ENCODE measurements at regions of chr5 and their contacts with region 1.

Region 1: GRCh38 chr5:133944263-133945185 is 23.9 kb downstream of the C5orf15 start:
- DNase-seq: no peak
- ATAC-seq: peak; percentile 87
- H3K4me3 Mint-ChIP-seq: no peak overlapping the region
- H3K27ac Mint-ChIP-seq: no peak overlapping the region
- H3K4me1 Mint-ChIP-seq: peaks cover 44% of the 10 kb centered on the region
- H3K27me3 Mint-ChIP-seq: no peaks in the 10 kb centered on the region
- CTCF ChIP-seq: no peak

Region 2: GRCh38 chr5:133364936-133365707 is 579.4 kb before region 1 on chr5:
- CTCF ChIA-PET with region 1: interaction called, 7 read pairs
- POLR2A ChIA-PET with region 1: no interaction called
- intact Hi-C with region 1: loop called (anchors 1 kb)
- DNase-seq: no peak
- ATAC-seq: peak; percentile 50
- H3K4me3 Mint-ChIP-seq: no peak overlapping the region
- H3K27ac Mint-ChIP-seq: no peak overlapping the region
- H3K4me1 Mint-ChIP-seq: no peaks in the 10 kb centered on the region
- H3K27me3 Mint-ChIP-seq: peaks cover 7% of the 10 kb centered on the region
- CTCF ChIP-seq: no peak

Region 3: DNA sequence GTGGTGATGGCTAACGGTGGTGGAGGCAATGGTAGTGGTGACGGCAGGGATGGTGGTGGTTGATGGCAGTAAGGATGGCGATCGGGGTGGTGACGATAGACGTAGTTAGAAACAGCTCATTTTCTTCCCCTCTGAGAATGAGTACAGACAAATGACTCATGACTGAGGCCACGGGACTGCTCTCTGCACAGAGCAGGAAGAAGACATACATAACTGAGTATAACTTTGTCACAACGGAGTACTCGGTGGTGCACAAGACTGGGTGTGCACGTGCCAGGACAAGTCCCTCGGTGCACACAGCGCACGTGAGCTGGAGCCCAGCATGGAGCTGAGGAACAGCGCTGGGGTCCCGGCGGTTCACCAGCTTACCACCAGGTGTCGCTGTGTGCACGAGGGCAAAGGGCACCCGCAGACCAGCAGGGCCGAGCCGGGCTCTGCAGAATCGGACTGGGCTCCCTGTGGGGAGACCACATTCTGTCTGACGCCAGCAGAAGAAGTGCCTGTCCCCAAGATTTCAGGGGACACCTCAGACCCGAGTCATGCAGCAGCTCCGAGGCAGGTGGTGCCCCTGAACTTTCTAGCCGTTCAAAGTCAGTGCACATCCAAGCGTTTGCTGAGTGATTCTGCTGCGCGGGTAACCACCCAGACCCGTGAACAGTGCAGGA is 520.8 kb before region 1 on chr5:
- CTCF ChIA-PET with region 1: interaction called, 15 read pairs
- POLR2A ChIA-PET with region 1: no interaction called
- intact Hi-C with region 1: loop called (anchors 1 kb)
- DNase-seq: peak; percentile 75
- ATAC-seq: peak; percentile 94
- H3K4me3 Mint-ChIP-seq: no peak overlapping the region
- H3K27ac Mint-ChIP-seq: peak overlapping the region; percentile 19
- H3K4me1 Mint-ChIP-seq: peaks cover 10% of the 10 kb centered on the region
- H3K27me3 Mint-ChIP-seq: peaks cover 3% of the 10 kb centered on the region
- CTCF ChIP-seq: peak; percentile 81

Region 4: GRCh38 chr5:133552931-133553525 is 391.5 kb before region 1 on chr5:
- CTCF ChIA-PET with region 1: interaction called, 8 read pairs
- POLR2A ChIA-PET with region 1: no interaction called
- intact Hi-C with region 1: loop called (anchors 1 kb)
- DNase-seq: peak; percentile 46
- ATAC-seq: peak; percentile 71
- H3K4me3 Mint-ChIP-seq: no peak overlapping the region
- H3K27ac Mint-ChIP-seq: no peak overlapping the region
- H3K4me1 Mint-ChIP-seq: no peaks in the 10 kb centered on the region
- H3K27me3 Mint-ChIP-seq: peaks cover 33% of the 10 kb centered on the region
- CTCF ChIP-seq: no peak

Region 5: DNA sequence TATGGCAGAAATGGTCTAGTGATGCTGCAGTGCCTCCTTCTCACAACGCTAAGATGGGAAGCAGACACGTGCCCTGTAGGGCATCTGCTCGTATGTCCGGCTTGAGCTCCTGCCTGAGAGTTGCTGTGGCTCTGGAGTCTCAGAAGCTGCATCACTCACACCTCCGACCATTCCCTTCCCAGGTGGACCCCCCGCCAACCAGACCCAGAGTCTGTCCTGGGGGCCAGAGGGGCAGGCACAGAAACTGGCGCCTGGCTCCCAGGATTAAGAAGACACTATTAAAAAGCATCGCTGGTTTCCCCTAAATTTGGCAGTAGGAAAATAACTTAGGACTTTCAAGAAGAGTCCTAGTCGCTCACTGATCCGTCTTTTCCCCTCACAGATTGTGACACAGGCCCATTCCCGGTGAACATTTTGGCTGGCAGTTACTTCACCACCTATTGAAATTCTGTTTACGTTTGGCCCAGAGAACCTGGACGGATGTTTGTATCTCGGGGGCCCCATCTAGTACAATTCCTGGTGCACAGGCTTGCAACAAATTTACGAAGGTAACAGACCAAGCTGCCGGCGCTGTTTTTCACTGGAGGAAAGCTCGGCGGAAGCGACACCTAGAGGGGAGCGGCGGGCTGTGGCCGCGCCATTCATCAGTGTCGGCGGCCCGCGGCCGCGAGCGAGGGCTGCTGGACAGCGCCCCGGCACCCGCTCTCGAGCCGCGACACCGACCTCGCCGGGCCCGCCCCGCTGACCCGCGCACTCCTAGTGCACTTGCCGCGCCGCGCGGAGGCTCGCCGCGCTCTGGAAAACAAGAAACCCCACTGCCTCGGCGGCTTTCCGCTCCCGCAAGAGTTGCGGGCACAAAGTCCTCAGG is 333.8 kb before region 1 on chr5:
- CTCF ChIA-PET with region 1: no interaction called
- POLR2A ChIA-PET with region 1: no interaction called
- intact Hi-C with region 1: loop called (anchors 1 kb)
- DNase-seq: peak; percentile 39
- ATAC-seq: peak; percentile 73
- H3K4me3 Mint-ChIP-seq: peak overlapping the region; percentile 73
- H3K27ac Mint-ChIP-seq: no peak overlapping the region
- H3K4me1 Mint-ChIP-seq: peaks cover 17% of the 10 kb centered on the region
- H3K27me3 Mint-ChIP-seq: peaks cover 53% of the 10 kb centered on the region
- CTCF ChIP-seq: no peak

Region 6: GRCh38 chr5:133754575-133755169 is 189.9 kb before region 1 on chr5:
- CTCF ChIA-PET with region 1: interaction called, 8 read pairs
- POLR2A ChIA-PET with region 1: no interaction called
- intact Hi-C with region 1: loop called (anchors 1 kb)
- DNase-seq: no peak
- ATAC-seq: peak; percentile 34
- H3K4me3 Mint-ChIP-seq: no peak overlapping the region
- H3K27ac Mint-ChIP-seq: no peak overlapping the region
- H3K4me1 Mint-ChIP-seq: no peaks in the 10 kb centered on the region
- H3K27me3 Mint-ChIP-seq: peaks cover 12% of the 10 kb centered on the region
- CTCF ChIP-seq: no peak

Region 7: DNA sequence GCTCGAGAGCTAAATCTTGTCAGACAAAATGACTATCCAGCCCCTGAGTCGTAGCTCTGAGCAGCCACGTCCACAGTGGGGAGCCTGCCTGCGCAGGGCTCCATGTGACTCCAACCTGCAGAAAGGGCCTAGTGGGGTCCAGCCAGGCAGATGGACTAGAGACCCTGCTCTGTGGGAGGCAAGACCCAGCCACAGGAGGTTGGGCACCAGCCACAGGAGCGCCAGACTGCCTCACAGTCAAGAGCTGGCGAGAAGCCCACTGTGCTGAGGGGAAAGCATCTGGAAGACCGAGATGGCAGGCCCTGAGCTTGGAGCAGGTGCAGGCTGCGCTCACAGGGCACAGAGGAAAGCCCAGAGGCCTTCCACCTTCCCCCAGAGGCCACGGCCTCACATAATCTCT is 37.4 kb before region 1 on chr5:
- CTCF ChIA-PET with region 1: interaction called, 18 read pairs
- POLR2A ChIA-PET with region 1: no interaction called
- intact Hi-C with region 1: loop called (anchors 1 kb)
- DNase-seq: no peak
- ATAC-seq: no peak
- H3K4me3 Mint-ChIP-seq: no peak overlapping the region
- H3K27ac Mint-ChIP-seq: no peak overlapping the region
- H3K4me1 Mint-ChIP-seq: peaks cover 14% of the 10 kb centered on the region
- H3K27me3 Mint-ChIP-seq: no peaks in the 10 kb centered on the region
- CTCF ChIP-seq: no peak

Measured in activated B cell treated with CpG ODN at 0.5 μM for 24 hours (primary cell).